Panc1 (cell line): ENCODE measurements at regions of chr17 and their contacts with region 1.

Region 1: DNA sequence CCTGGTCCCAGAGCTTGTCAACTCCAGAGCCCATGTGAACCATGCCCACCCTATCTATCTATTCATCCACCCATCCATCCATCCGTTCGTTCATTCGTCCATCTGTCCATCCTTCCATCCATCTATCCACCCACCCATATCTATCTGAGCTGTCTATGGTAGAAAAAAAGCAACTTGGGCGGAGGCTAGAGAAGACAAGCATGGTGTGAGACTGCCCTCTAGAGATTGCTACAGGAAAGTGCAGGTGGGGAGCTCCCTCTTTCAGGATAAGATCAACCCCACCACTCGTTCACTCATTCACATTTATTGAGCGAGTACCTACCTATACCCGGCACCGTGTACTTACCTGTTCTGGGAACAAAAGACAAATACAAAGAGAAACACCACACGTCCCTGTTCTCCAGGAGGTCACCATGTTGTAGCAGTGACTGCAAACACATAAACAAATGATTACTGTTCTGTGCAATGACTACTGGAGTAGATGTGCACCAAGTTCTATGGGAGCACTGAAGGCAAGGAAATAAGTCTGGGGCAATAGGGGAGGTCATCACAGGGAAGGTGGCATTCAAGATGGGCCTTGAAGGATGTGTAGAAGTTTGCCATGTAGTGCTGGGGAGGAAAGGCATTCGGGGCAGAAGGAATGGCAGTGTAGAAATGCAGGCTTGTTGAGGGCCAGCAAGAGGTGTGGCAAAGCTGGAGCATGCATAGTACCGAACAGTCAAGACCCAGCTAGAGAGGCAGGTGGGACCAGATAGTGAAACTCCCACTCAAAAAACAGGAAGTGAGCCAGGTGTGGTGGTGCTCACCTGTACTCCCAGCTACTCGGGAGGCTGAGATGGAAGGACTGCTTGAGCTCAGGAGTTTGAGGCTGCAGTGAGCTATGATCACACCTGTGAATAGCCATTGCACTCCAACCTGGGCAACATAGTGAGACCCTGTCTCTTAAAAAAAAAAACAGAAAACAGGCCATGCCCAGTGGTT is 13.4 kb upstream of the ATP5MC1 start:
- DNase-seq: peak; percentile 73
- ATAC-seq: peak; percentile 90
- H3K4me3 ChIP-seq: no peak overlapping the region
- H3K27ac ChIP-seq: no peak overlapping the region
- H3K4me1 ChIP-seq: no peaks in the 10 kb centered on the region
- H3K27me3 ChIP-seq: no peaks in the 10 kb centered on the region
- CTCF ChIP-seq: peak; percentile 99

Region 2: GRCh38 chr17:48724251-48725003 is 154.8 kb before region 1 on chr17:
- CTCF ChIA-PET with region 1: interaction called, 47 read pairs
- POLR2A ChIA-PET with region 1: interaction called, 3 read pairs
- in situ Hi-C with region 1: no loop called
- intact Hi-C with region 1: loop called (anchors 1 kb)
- DNase-seq: peak; percentile 22
- ATAC-seq: peak; percentile 85
- H3K4me3 ChIP-seq: peak overlapping the region in 1 of 2 experiments; percentile 4; a peak in 1 of 4 replicates
- H3K27ac ChIP-seq: no peak overlapping the region
- H3K4me1 ChIP-seq: peaks cover 3% of the 10 kb centered on the region; the same call in 1 of the 2 replicates
- H3K27me3 ChIP-seq: no peaks in the 10 kb centered on the region
- CTCF ChIP-seq: peak; percentile 95

Region 3: GRCh38 chr17:48791128-48792032 is 87.8 kb before region 1 on chr17:
- CTCF ChIA-PET with region 1: interaction called, 22 read pairs
- POLR2A ChIA-PET with region 1: interaction called, 4 read pairs
- in situ Hi-C with region 1: no loop called
- intact Hi-C with region 1: no loop called
- DNase-seq: peak; percentile 75
- ATAC-seq: peak; percentile 95
- H3K4me3 ChIP-seq: peak overlapping the region; percentile 7 to 23; a peak in 3 of 4 replicates
- H3K27ac ChIP-seq: peak overlapping the region; percentile 73
- H3K4me1 ChIP-seq: peaks cover 23% of the 10 kb centered on the region
- H3K27me3 ChIP-seq: no peaks in the 10 kb centered on the region
- CTCF ChIP-seq: peak; percentile 96

Region 4: GRCh38 chr17:48816774-48817590 is 62.2 kb before region 1 on chr17 and contains the start of gene TTLL6:
- CTCF ChIA-PET with region 1: interaction called, 111 read pairs
- POLR2A ChIA-PET with region 1: interaction called, 8 read pairs
- in situ Hi-C with region 1: loop called (anchors 10 kb)
- intact Hi-C with region 1: loop called (anchors 1 kb)
- DNase-seq: no peak
- ATAC-seq: peak; percentile 93
- H3K4me3 ChIP-seq: peak within 1 kb of the TSS; percentile 47 to 63
- H3K27ac ChIP-seq: peak within 1 kb of the TSS; percentile 25; the same call in 1 of the 2 replicates
- H3K4me1 ChIP-seq: peaks cover 16% of the 10 kb centered on the region
- H3K27me3 ChIP-seq: peaks cover 8% of the 10 kb centered on the region; the same call in 1 of the 2 replicates
- CTCF ChIP-seq: no peak
- total RNA-seq, gene TTLL6: 2.5 TPM

Region 5: DNA sequence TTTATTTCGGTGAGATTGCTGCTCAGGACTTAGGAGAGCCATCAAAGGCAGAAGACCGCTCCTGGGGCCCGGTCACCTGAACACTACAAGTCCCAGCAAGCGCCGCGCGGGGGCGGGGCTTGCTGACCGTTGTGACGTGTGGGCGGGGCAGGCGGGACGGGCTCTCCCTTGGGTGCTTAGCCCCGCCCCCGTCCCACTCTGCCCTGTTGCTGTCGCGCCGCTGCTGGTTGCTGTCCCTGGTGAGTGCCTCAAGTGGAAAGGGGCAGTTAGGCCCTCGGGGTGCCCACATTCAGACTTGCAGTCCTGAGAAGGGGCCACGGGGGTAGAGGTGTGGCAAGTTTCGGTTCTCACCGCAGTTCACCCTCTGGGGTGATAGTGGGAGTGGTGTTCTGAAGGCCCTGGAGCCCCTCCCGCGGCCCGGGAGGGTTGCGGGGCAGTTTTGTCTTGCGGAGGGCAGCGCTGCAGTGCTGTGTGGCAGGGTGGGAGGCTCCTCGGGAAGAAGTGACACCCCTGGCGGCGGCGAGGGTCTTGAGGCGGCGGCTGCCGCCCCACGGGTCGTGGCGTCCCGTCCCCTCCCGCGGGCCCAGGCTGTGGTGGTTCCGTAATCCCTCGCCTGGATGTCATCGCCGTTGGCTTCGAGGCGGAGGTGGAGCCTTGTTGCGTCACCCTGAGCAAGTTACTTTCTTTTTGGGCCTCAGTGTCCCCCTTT is 48.2 kb before region 1 on chr17 and contains the start of gene CALCOCO2:
- CTCF ChIA-PET with region 1: interaction called, 14 read pairs
- POLR2A ChIA-PET with region 1: interaction called, 19 read pairs
- in situ Hi-C with region 1: no loop called
- intact Hi-C with region 1: no loop called
- DNase-seq: peak; percentile 64
- ATAC-seq: peak; percentile 99
- H3K4me3 ChIP-seq: peak within 1 kb of the TSS; percentile 68 to 91
- H3K27ac ChIP-seq: peak within 1 kb of the TSS; percentile 92
- H3K4me1 ChIP-seq: peaks cover 18% of the 10 kb centered on the region
- H3K27me3 ChIP-seq: no peaks in the 10 kb centered on the region
- CTCF ChIP-seq: no peak
- total RNA-seq, gene CALCOCO2: 282 TPM

Region 6: GRCh38 chr17:48892940-48893645 is 13.9 kb after region 1 on chr17:
- CTCF ChIA-PET with region 1: interaction called, 17 read pairs
- POLR2A ChIA-PET with region 1: interaction called, 14 read pairs
- in situ Hi-C with region 1: no loop called
- intact Hi-C with region 1: no loop called
- DNase-seq: no peak
- ATAC-seq: peak; percentile 0
- H3K4me3 ChIP-seq: peak overlapping the region; percentile 80 to 95
- H3K27ac ChIP-seq: peak overlapping the region; percentile 97
- H3K4me1 ChIP-seq: peaks cover 18% of the 10 kb centered on the region
- H3K27me3 ChIP-seq: no peaks in the 10 kb centered on the region
- CTCF ChIP-seq: no peak

Region 7: GRCh38 chr17:48973806-48974205 is 94.6 kb after region 1 on chr17:
- CTCF ChIA-PET with region 1: no interaction called
- POLR2A ChIA-PET with region 1: no interaction called
- in situ Hi-C with region 1: no loop called
- intact Hi-C with region 1: no loop called
- DNase-seq: no peak
- ATAC-seq: no peak
- H3K4me3 ChIP-seq: no peak overlapping the region
- H3K27ac ChIP-seq: peak overlapping the region; percentile 81; the same call in 1 of the 2 replicates
- H3K4me1 ChIP-seq: peaks cover 37% of the 10 kb centered on the region
- H3K27me3 ChIP-seq: no peaks in the 10 kb centered on the region
- CTCF ChIP-seq: no peak

Region 8: DNA sequence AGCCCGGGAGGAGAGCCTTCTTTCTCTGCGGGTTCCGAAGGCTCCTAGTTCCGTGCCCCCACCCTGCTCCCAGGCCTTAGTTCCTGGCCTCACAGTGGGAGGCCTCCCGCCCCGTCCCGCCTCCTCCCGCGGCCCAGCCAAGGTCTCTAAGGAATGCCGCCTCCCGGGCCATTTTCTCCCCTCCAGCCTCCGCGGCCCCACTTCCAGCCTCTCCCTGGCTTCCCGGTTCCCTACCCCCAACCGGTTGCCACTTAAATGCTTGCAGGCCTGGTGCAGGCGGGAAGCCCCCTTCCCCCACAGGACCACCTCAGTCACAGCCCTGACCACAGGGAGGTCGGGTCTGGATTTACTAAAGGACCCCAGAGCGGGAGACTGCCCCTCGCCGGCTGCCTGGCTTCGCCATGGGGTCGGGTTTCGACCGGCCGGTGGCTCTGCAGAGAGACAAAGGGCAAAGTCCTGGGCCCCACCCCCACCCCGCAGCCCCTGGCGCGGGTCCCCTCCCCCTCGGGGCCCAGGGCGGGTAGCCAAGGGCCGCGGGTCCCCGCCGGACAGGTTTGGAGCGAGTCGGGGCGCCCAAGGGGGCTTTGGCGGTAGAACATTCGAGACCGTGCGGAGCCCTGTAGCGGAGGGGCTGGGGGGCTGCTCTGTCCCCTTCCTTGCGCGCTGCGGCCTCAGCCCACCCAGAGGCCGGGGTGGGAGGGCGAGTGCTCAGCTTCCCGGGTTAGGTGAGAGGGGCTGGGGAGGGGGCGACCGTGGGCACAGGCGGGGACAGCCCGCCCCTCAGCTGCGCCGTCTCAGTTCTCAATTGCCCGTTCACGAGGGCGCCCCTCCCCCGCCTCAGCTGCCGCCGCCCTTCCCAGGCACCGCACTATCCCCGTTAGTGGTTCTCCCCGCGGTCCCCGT is 134.4 kb after region 1 on chr17:
- CTCF ChIA-PET with region 1: no interaction called
- POLR2A ChIA-PET with region 1: no interaction called
- in situ Hi-C with region 1: no loop called
- intact Hi-C with region 1: no loop called
- DNase-seq: no peak
- ATAC-seq: peak; percentile 24
- H3K4me3 ChIP-seq: no peak overlapping the region
- H3K27ac ChIP-seq: 0 out of 2 replicates have a peak overlapping the region, but pooled peaks have one; percentile 13
- H3K4me1 ChIP-seq: peaks cover 26% of the 10 kb centered on the region
- H3K27me3 ChIP-seq: no peaks in the 10 kb centered on the region
- CTCF ChIP-seq: no peak

Region 9: DNA sequence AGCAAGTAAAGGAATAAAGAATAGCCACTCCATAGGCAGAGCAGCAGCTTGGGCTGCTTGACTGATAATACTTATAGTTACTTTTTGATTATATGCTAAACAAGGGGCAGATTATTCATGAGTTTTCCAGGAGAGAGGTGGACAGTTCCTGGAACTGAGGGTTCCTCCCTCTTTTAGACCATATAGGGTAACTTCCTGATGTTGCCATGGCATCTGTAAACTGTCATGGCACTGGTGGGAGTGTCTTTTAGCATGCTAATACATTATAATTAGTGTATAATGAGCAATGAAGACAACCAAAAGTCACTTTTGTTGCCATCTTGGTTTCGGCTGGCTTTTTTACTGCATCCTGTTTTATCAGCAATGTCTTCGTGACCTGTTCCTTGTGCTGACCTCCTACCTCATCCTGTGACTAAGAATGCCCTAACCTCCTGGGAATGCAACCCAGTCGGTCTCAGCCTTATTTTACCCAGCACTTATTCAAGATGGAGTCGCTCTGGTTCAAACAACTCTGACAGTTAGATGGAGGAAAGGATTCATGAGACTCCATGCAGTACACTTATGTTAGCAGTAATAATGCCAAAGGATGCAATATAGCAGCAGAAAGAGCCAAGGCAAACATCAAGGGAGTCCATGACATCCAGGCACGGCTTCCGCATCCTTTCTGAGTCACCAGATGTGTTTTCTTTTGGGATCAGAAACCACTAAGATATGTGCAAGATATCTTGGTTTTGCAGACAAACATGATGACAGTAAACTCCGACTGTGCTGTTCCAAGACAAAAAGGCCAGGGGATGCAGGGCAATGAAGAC is 197.6 kb after region 1 on chr17:
- CTCF ChIA-PET with region 1: interaction called, 13 read pairs
- POLR2A ChIA-PET with region 1: no interaction called
- in situ Hi-C with region 1: no loop called
- intact Hi-C with region 1: no loop called
- DNase-seq: peak; percentile 45
- ATAC-seq: peak; percentile 80
- H3K4me3 ChIP-seq: no peak overlapping the region
- H3K27ac ChIP-seq: no peak overlapping the region
- H3K4me1 ChIP-seq: no peaks in the 10 kb centered on the region
- H3K27me3 ChIP-seq: no peaks in the 10 kb centered on the region
- CTCF ChIP-seq: no peak

Region 10: DNA sequence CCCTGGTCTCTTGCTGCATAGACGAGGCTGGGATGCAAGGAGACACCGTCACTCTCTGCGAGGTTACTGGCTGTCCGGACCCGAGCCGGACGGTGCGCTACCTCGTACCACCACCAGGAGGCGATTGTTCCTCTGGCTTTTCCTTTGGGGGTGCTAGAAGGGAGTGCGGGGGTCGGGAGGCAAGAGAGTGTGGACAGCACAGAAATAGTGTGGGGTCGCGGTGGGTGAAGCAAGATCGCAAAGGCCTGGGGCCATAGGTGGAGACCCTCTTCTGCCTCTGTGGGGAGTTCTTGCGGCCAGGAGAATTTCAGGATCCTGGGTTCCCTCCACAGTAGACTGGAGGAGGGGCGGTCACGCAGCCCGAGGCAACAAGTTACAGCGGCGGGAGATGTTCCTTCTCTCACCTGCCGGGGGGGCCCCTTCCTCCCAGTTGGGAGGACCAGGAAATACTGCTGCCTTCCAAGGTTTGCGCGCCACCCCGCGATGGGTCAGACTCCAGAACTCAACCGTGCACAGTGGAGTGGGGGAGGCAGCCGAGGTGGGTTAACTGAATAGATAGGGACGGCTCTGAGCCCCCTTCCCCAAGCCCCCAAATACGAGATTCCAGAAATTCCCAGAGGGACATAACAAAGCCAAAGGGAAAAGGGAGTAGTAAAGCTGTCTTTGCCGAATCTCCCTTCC is 344.4 kb after region 1 on chr17:
- CTCF ChIA-PET with region 1: no interaction called
- POLR2A ChIA-PET with region 1: no interaction called
- in situ Hi-C with region 1: no loop called
- intact Hi-C with region 1: no loop called
- DNase-seq: no peak
- ATAC-seq: peak; percentile 66
- H3K4me3 ChIP-seq: peak overlapping the region; percentile 1 to 29; a peak in 3 of 4 replicates
- H3K27ac ChIP-seq: no peak overlapping the region
- H3K4me1 ChIP-seq: peaks cover 14% of the 10 kb centered on the region
- H3K27me3 ChIP-seq: no peaks in the 10 kb centered on the region; the same call in 1 of the 2 replicates
- CTCF ChIP-seq: peak; percentile 98